Activated T-helper 1 cell treated with anti-CD3 and anti-CD28 coated beads, Interleukin-12 subunit alpha, Interleukin-12 subunit beta, Interleukin-2, Interleukin-4 antibody, amounts not matched to agents 30 ng/mL and 10 ng/mL and 1 ng/mL, durations not matched to agents 14 hours and 24 hours and 36 hours (primary cell): ENCODE measurements at regions of chr20 and their contacts with region 1.

Region 1: DNA sequence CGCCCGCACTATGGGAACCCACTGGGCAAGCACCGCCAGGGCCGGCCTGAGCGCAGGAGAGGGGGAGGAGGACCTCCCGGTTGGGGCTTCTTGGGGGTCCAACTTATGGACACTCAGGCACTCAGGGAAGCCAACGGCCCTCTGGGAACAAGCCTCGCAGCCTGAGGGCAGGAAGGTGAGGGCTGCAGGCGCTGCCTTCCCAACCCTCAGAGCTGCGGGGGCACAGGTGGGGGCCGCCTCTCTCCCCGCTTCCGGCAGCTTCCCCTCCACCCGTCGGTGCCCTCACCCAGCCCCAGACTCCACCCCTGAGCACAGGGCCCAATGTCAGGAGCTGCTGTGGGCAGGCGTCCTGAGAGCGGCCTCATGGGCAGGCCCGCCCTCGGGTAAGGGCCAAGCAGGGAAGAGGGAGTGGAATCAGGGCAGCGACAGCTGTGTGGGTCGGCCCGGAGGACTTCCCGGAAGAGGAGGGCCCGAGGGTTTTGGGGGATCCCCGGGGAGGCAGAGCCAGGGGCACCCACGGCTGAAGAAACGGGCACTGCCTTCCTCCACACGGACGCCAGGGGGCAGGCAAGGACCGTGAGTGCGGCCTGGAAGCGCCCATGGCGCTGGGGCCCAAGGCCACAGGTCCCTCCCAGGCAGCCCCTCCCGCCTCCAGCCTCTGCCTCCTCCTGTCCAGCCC is 488 bp upstream of the PTK6 start:
- DNase-seq: peak; percentile 95
- H3K4me3 Mint-ChIP-seq: peak overlapping the region; percentile 68
- H3K27ac Mint-ChIP-seq: peak overlapping the region; percentile 90
- H3K4me1 Mint-ChIP-seq: no peaks in the 10 kb centered on the region
- H3K27me3 Mint-ChIP-seq: peaks cover 1% of the 10 kb centered on the region

Region 2: GRCh38 chr20:63508072-63508768 is 29.4 kb before region 1 on chr20:
- intact Hi-C with region 1: no loop called
- DNase-seq: no peak
- H3K4me3 Mint-ChIP-seq: peak overlapping the region; percentile 20
- H3K27ac Mint-ChIP-seq: peak overlapping the region; percentile 56
- H3K4me1 Mint-ChIP-seq: no peaks in the 10 kb centered on the region
- H3K27me3 Mint-ChIP-seq: peaks cover 20% of the 10 kb centered on the region

Region 3: DNA sequence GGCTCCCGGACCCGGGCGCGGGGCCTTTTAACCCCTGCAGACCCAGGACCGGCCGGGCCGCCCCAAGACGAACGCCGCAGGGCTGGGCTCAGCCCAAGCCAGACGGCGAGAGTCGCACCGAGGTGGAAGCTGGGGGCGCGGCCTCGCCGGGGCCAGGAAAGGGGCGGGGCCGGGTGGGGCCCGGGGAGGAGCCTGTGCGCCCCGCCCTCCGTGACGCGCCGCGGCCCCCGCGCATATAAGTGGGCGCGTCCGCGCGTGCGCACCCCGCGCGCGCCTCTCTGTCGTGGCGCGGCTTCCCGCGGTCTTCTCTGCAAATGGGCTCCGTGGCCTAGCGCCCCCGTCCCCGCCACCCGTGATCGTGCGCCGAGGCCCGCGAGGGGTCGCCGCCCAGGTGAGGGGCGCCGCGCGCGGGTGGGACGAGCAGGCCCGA is 17.1 kb before region 1 on chr20 and contains the start of gene PPDPF:
- intact Hi-C with region 1: loop called (anchors 1 kb)
- DNase-seq: peak; percentile 81
- H3K4me3 Mint-ChIP-seq: peak within 1 kb of the TSS; percentile 84
- H3K27ac Mint-ChIP-seq: peak within 1 kb of the TSS; percentile 70
- H3K4me1 Mint-ChIP-seq: no peaks in the 10 kb centered on the region
- H3K27me3 Mint-ChIP-seq: peaks cover 4% of the 10 kb centered on the region
- total RNA-seq, gene PPDPF: 117 and 122 TPM in 2 replicates

Region 4: GRCh38 chr20:63627129-63627750 is 89.6 kb after region 1 on chr20:
- intact Hi-C with region 1: loop called (anchors 1 kb)
- DNase-seq: peak; percentile 95
- H3K4me3 Mint-ChIP-seq: peak overlapping the region; percentile 100
- H3K27ac Mint-ChIP-seq: peak overlapping the region; percentile 98
- H3K4me1 Mint-ChIP-seq: peaks cover 23% of the 10 kb centered on the region
- H3K27me3 Mint-ChIP-seq: no peaks in the 10 kb centered on the region

Region 5: GRCh38 chr20:63682384-63683139 is 144.9 kb after region 1 on chr20:
- intact Hi-C with region 1: no loop called
- DNase-seq: no peak
- H3K4me3 Mint-ChIP-seq: no peak overlapping the region
- H3K27ac Mint-ChIP-seq: no peak overlapping the region
- H3K4me1 Mint-ChIP-seq: no peaks in the 10 kb centered on the region
- H3K27me3 Mint-ChIP-seq: no peaks in the 10 kb centered on the region

Region 6: DNA sequence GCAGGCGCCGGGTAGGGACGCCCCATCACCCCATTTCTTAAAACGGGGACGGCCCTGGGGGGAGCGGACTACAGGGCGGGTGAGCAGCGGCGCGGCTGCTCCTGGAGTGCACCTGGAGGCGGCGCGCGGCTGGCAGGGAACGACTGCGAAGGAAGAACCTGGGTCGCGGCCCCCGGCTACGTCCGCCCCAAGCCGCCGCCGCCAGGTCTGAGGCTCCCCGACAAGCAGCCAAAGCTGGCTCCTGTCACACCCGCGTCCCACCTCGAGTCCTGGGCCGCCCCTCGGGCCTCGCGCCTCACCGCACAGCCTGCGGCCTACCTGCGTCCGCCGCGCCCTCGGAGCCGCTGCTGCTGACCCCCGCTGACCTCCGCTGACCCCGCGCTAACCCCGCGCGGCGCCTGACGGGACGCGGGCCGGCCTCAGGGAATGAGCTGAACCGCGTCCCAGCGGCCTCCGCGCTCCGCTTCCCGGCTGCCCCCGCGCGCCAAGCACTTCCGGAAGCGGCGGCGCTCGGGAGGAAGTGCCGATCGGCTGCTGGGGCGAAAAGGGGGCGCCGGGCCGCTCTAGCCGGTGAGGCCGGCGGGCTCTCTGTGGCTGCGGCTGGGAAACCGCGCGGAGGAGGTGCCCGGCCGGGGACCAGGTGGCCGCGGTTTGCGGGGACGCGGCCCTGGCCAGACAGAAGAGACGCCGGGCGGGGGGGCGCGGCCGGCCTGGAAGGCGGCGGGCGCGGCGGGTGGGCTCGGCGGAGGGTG is 170.1 kb after region 1 on chr20 and contains the starts of genes ARFRP1 and ZGPAT:
- intact Hi-C with region 1: loop called (anchors 2 kb)
- DNase-seq: peak; percentile 88
- H3K4me3 Mint-ChIP-seq: peak within 1 kb of the TSS; percentile 94
- H3K27ac Mint-ChIP-seq: peak within 1 kb of the TSS; percentile 86
- H3K4me1 Mint-ChIP-seq: peaks cover 31% of the 10 kb centered on the region
- H3K27me3 Mint-ChIP-seq: no peaks in the 10 kb centered on the region
- total RNA-seq, gene ARFRP1: 71.8 and 73.5 TPM in 2 replicates
- total RNA-seq, gene ZGPAT: 34.5 and 36.7 TPM in 2 replicates

Region 7: GRCh38 chr20:63791497-63792156 is 254.0 kb after region 1 on chr20:
- intact Hi-C with region 1: loop called (anchors 1 kb)
- DNase-seq: no peak
- H3K4me3 Mint-ChIP-seq: no peak overlapping the region
- H3K27ac Mint-ChIP-seq: no peak overlapping the region
- H3K4me1 Mint-ChIP-seq: no peaks in the 10 kb centered on the region
- H3K27me3 Mint-ChIP-seq: peaks cover 10% of the 10 kb centered on the region

Region 8: GRCh38 chr20:63955827-63956663 is 418.4 kb after region 1 on chr20 and contains the start of gene UCKL1:
- intact Hi-C with region 1: loop called (anchors 1 kb)
- DNase-seq: peak; percentile 88
- H3K4me3 Mint-ChIP-seq: peak within 1 kb of the TSS; percentile 84
- H3K27ac Mint-ChIP-seq: peak within 1 kb of the TSS; percentile 93
- H3K4me1 Mint-ChIP-seq: peaks cover 19% of the 10 kb centered on the region
- H3K27me3 Mint-ChIP-seq: no peaks in the 10 kb centered on the region
- total RNA-seq, gene UCKL1: 48.7 and 49.3 TPM in 2 replicates

Region 9: GRCh38 chr20:64038565-64039292 is 501.1 kb after region 1 on chr20:
- intact Hi-C with region 1: loop called (anchors 1 kb)
- DNase-seq: peak; percentile 77
- H3K4me3 Mint-ChIP-seq: peak overlapping the region; percentile 73
- H3K27ac Mint-ChIP-seq: no peak overlapping the region
- H3K4me1 Mint-ChIP-seq: peaks cover 51% of the 10 kb centered on the region
- H3K27me3 Mint-ChIP-seq: peaks cover 3% of the 10 kb centered on the region